ENCODE measurements at regions of chr9 and their contacts with region 1.

Region 1: DNA sequence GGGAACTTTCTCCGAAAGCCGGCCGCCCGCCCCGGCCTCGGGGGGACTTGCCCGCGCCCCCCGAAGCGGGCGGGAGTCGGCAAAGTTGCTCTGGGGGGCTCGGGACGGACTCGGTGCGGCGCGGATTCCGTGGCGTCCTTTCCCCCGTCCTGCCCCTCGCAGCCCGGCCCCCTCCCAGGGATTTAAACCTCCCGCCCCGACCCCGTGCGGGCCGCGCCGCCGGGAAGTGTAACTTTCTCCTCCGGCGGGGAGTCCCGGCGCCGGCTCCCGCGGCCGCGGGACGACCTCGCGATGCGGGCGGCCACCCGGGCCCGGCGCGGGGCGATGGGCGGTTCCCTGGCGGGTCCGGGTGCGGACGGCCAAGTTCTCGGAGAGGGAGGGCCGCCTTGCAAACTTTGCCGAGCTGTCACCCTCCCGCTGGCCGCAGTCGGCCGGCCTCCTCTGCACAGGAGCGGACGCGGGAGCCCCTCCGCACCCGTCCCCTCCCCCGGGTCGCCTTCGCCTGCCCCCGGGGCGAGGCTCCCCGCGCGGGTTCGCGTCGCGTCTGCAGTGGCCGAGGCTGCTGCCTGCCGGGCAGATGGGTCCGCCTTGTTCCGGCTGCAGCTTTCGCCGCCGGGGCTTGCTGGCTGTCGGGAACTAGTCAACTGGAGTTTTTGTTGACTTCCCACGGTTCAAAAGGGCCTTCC is 730 bp downstream of the PBX3 start:
- DNase-seq: peak; percentile 43
- ATAC-seq: peak in 1 of 2 donors; percentile 0

Region 2: GRCh38 chr9:125822902-125823301 is 75.0 kb after region 1 on chr9:
- intact Hi-C with region 1: loop called in 1 of 2 experiments (anchors 2 kb)
- DNase-seq: no peak
- ATAC-seq: no peak

Region 3: GRCh38 chr9:125889476-125890419 is 141.8 kb after region 1 on chr9:
- intact Hi-C with region 1: loop called in 1 of 2 experiments (anchors 2 kb)
- DNase-seq: peak; percentile 31
- ATAC-seq: peak; percentile 82 to 86

Region 4: DNA sequence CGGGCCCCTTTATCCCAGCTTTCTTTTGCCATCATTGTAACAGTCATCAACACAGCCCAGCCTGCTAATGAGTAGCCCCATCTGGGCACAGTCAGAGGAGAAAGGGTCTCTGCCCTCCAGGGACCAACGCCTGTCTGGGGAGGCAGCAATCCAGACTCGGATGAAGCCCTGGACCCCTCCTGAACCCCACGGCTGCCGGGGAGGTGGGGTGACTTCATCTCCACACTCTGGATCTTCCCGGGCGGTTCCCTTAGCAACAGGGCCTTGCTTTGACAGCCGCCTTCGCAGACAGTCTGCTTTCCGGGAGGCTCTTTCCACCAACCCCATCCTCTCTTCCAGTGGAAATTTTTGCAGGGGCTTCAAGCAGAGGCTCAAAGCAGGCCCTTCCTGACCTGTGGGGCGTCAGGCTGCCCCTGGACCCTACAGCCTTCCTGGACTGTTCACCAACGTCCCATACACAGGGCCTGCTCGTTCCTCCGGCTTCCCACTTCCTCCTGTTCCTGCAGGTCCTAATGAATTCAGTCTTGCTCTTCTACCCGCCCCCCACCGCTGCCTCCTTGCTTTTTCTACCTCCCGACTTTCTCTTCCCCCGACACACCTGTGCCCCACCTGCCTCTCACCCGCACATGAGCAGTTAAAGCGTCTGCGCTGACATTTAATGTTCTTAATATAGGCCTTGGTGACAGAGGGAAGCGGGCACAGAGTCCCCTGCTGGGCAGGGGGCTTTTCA is 417.1 kb after region 1 on chr9:
- intact Hi-C with region 1: no loop called
- DNase-seq: no peak
- ATAC-seq: no peak